ENCODE measurements at regions of chr18 and their contacts with region 1.

Region 1: GRCh38 chr18:58043491-58044379 is at the start of gene NEDD4L:
- DNase-seq: peak; percentile 92
- H3K4me3 ChIP-seq: peak within 1 kb of the TSS; percentile 90 to 92
- H3K27ac ChIP-seq: peak within 1 kb of the TSS; percentile 84 to 86
- H3K4me1 ChIP-seq: peaks cover 0 to 10% of the 10 kb centered on the region in 2 experiments; a peak in 2 of 4 replicates
- H3K27me3 ChIP-seq: no peaks in the 10 kb centered on the region
- CTCF ChIP-seq: peak; percentile 77
- EP300 ChIP-seq: no peak
- RAD21 ChIP-seq: peak; percentile 86
- polyA plus RNA-seq, gene NEDD4L: 11.0 and 13.2 TPM in 2 replicates

Region 2: DNA sequence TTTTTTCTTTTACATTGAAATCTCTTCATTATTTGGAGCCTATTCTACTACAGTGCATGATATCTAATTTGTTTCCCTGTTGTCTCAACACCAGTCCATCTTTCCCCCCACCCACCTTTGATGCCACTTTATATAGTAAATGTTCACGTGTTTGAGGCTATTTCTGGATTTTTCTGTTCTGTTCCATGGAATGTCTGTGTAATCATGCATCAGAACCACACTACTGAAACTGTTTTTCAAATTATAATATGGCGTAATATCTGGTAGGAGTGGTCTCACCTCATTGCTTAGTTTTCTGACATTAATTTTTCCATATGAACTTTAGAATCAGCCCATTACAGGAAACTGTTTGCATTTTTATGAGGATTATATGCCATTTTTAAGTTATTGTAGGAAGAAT is 403.0 kb before region 1 on chr18:
- CTCF ChIA-PET with region 1: no interaction called
- POLR2A ChIA-PET with region 1: no interaction called
- DNase-seq: no peak
- H3K4me3 ChIP-seq: no peak overlapping the region
- H3K27ac ChIP-seq: no peak overlapping the region
- H3K4me1 ChIP-seq: 0 out of 4 replicates have a peak, but pooled peaks cover 0 to 4% of the 10 kb centered on the region in 2 experiments
- H3K27me3 ChIP-seq: no peaks in the 10 kb centered on the region
- CTCF ChIP-seq: no peak
- EP300 ChIP-seq: no peak
- RAD21 ChIP-seq: no peak

Region 3: DNA sequence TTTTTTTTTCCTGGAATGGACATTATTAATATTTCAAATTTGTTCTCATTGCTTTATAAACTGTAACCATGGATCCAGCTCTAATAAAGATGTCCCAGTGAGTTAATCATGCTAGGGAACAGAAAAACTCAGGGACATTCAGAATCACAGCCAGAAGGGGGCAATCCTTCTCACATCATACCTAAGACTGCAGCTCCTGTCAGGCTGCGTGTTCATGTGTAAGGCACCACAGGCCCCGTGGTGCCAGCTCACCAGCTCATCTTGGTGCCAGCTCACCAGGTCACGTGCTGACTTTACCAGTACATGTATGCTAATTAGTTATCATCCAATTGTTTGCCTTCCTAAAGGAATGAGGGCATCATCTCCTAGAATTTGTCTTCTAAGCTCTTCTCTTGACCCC is 84.5 kb before region 1 on chr18:
- CTCF ChIA-PET with region 1: interaction called, 10 read pairs
- POLR2A ChIA-PET with region 1: no interaction called
- DNase-seq: peak; percentile 49
- H3K4me3 ChIP-seq: peak overlapping the region in 1 of 2 experiments; percentile 35; a peak in 1 of 4 replicates
- H3K27ac ChIP-seq: no peak overlapping the region
- H3K4me1 ChIP-seq: peaks cover 0 to 7% of the 10 kb centered on the region in 2 experiments; a peak in 2 of 4 replicates
- H3K27me3 ChIP-seq: no peaks in the 10 kb centered on the region; the same call in 1 of the 2 replicates
- CTCF ChIP-seq: peak; percentile 52
- EP300 ChIP-seq: no peak
- RAD21 ChIP-seq: peak; percentile 56

Region 4: GRCh38 chr18:58105888-58106260 is 62.1 kb after region 1 on chr18:
- CTCF ChIA-PET with region 1: interaction called, 13 read pairs
- POLR2A ChIA-PET with region 1: no interaction called
- DNase-seq: peak; percentile 52
- H3K4me3 ChIP-seq: no peak overlapping the region
- H3K27ac ChIP-seq: no peak overlapping the region
- H3K4me1 ChIP-seq: peaks cover 0 to 15% of the 10 kb centered on the region in 2 experiments; a peak in 2 of 4 replicates
- H3K27me3 ChIP-seq: no peaks in the 10 kb centered on the region
- CTCF ChIP-seq: no peak
- EP300 ChIP-seq: no peak
- RAD21 ChIP-seq: no peak

Region 5: DNA sequence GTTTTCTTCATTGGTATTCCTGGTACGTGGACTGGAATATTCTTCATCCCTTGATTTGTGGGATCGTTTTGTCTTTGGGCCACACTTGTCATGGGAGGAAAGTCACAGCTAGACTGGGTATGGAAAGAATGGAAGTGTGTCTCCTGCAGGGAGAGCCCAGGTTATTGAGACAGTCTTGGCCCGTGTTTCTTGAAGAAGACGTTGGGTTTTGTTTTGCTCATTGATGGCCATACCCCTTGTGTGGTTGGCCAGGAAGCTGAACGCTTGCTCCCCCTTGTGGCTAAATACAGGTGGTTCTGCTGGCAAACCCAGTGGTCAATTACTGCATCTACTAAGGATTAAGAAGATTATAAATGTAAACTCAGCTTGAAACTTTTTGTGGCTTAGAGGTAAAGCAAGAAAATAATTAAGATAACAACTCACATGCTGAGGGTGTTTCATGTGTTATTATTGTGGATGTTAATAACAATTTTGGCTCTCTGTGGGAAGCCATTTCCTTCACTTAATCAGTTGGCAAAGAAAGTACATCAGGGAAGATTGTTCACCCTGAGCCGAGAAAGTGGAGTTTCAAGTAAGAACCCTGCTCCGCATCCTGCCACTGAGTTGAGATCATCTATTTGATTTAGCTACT is 92.1 kb after region 1 on chr18:
- CTCF ChIA-PET with region 1: interaction called, 29 read pairs
- POLR2A ChIA-PET with region 1: no interaction called
- DNase-seq: peak; percentile 76
- H3K4me3 ChIP-seq: peak overlapping the region in 1 of 2 experiments; percentile 5; a peak in 1 of 4 replicates
- H3K27ac ChIP-seq: no peak overlapping the region
- H3K4me1 ChIP-seq: no peaks in the 10 kb centered on the region; a peak in 1 of 4 replicates
- H3K27me3 ChIP-seq: no peaks in the 10 kb centered on the region
- CTCF ChIP-seq: peak; percentile 89
- EP300 ChIP-seq: no peak
- RAD21 ChIP-seq: peak; percentile 73

Region 6: GRCh38 chr18:58180738-58181353 is 137.1 kb after region 1 on chr18:
- CTCF ChIA-PET with region 1: interaction called, 13 read pairs
- POLR2A ChIA-PET with region 1: no interaction called
- DNase-seq: peak; percentile 65
- H3K4me3 ChIP-seq: no peak overlapping the region
- H3K27ac ChIP-seq: no peak overlapping the region
- H3K4me1 ChIP-seq: peaks cover 22 to 35% of the 10 kb centered on the region in 2 experiments
- H3K27me3 ChIP-seq: no peaks in the 10 kb centered on the region
- CTCF ChIP-seq: peak; percentile 96
- EP300 ChIP-seq: no peak
- RAD21 ChIP-seq: peak; percentile 79

Measured in SK-N-SH (cell line).